B cell (primary cell): ENCODE measurements at regions of chr5 and their contacts with region 1.

Region 1: GRCh38 chr5:125835293-125836172 is 587.7 kb upstream of the GRAMD2B start:
- DNase-seq: peak; percentile 36
- ATAC-seq: peak; percentile 69
- H3K4me3 ChIP-seq: no peak overlapping the region
- H3K4me3 Mint-ChIP-seq: no peak overlapping the region
- H3K27ac ChIP-seq: no peak overlapping the region
- H3K27ac Mint-ChIP-seq: no peak overlapping the region
- H3K4me1 ChIP-seq: no peaks in the 10 kb centered on the region
- H3K4me1 Mint-ChIP-seq: peaks cover 4% of the 10 kb centered on the region
- H3K27me3 ChIP-seq: peaks cover 0 to 4% (median 0%) of the 10 kb centered on the region in 4 experiments
- H3K27me3 Mint-ChIP-seq: peaks cover 20% of the 10 kb centered on the region
- CTCF ChIP-seq: peak; percentile 70

Region 2: GRCh38 chr5:123937230-123937629 is 1898.3 kb before region 1 on chr5:
- CTCF ChIA-PET with region 1: no interaction called
- POLR2A ChIA-PET with region 1: no interaction called
- intact Hi-C with region 1: loop called (anchors 1 kb)
- DNase-seq: peak; percentile 60
- ATAC-seq: no peak
- H3K4me3 ChIP-seq: no peak overlapping the region
- H3K4me3 Mint-ChIP-seq: no peak overlapping the region
- H3K27ac ChIP-seq: no peak overlapping the region
- H3K27ac Mint-ChIP-seq: no peak overlapping the region
- H3K4me1 ChIP-seq: peaks cover 0 to 3% of the 10 kb centered on the region in 2 donors
- H3K4me1 Mint-ChIP-seq: peaks cover 3% of the 10 kb centered on the region
- H3K27me3 ChIP-seq: no peaks in the 10 kb centered on the region
- H3K27me3 Mint-ChIP-seq: no peaks in the 10 kb centered on the region
- CTCF ChIP-seq: peak; percentile 73

Region 3: GRCh38 chr5:125630237-125630636 is 205.3 kb before region 1 on chr5:
- CTCF ChIA-PET with region 1: no interaction called
- POLR2A ChIA-PET with region 1: no interaction called
- intact Hi-C with region 1: no loop called
- DNase-seq: no peak
- ATAC-seq: no peak
- H3K4me3 ChIP-seq: no peak overlapping the region
- H3K4me3 Mint-ChIP-seq: no peak overlapping the region
- H3K27ac ChIP-seq: no peak overlapping the region
- H3K27ac Mint-ChIP-seq: no peak overlapping the region
- H3K4me1 ChIP-seq: no peaks in the 10 kb centered on the region
- H3K4me1 Mint-ChIP-seq: no peaks in the 10 kb centered on the region
- H3K27me3 ChIP-seq: peaks cover 0 to 2% (median 0%) of the 10 kb centered on the region in 4 experiments
- H3K27me3 Mint-ChIP-seq: peaks cover 3% of the 10 kb centered on the region
- CTCF ChIP-seq: no peak

Region 4: GRCh38 chr5:125914471-125914870 is 78.9 kb after region 1 on chr5:
- CTCF ChIA-PET with region 1: no interaction called
- POLR2A ChIA-PET with region 1: no interaction called
- intact Hi-C with region 1: no loop called
- DNase-seq: no peak
- ATAC-seq: no peak
- H3K4me3 ChIP-seq: no peak overlapping the region
- H3K4me3 Mint-ChIP-seq: no peak overlapping the region
- H3K27ac ChIP-seq: no peak overlapping the region
- H3K27ac Mint-ChIP-seq: no peak overlapping the region
- H3K4me1 ChIP-seq: no peaks in the 10 kb centered on the region
- H3K4me1 Mint-ChIP-seq: no peaks in the 10 kb centered on the region
- H3K27me3 ChIP-seq: peaks cover 0 to 7% (median 0%) of the 10 kb centered on the region in 4 experiments
- H3K27me3 Mint-ChIP-seq: peaks cover 14% of the 10 kb centered on the region
- CTCF ChIP-seq: no peak